ENCODE measurements at regions of chr1 and their contacts with region 1.

Region 1: DNA sequence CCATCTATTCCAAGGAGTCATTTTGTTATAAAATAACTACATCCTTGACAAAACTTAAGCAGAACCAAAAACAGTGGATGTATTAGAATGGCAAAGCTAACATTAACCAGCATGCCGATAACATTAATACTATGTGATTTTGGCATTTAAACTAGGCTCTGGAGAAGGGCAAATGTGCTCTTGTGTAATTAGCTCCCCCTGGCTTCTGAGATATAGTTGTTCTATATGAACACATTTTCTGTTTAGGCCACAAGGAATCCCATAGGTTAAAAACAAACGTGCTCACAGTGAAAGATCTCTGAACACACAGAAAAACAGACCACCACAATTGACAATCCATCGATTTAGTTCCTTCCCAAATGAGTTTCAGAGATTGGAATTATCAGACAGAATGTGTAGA is 57.4 kb upstream of the TARS2 start:
- DNase-seq: no peak
- H3K4me3 Mint-ChIP-seq: no peak overlapping the region
- H3K27ac Mint-ChIP-seq: peak overlapping the region; percentile 32
- H3K4me1 Mint-ChIP-seq: peaks cover 17% of the 10 kb centered on the region
- H3K27me3 Mint-ChIP-seq: no peaks in the 10 kb centered on the region
- CTCF ChIP-seq: peak; percentile 38

Region 2: GRCh38 chr1:150389650-150390049 is 40.2 kb before region 1 on chr1:
- CTCF ChIA-PET with region 1: no interaction called
- intact Hi-C with region 1: loop called (anchors 1 kb)
- DNase-seq: no peak
- H3K4me3 Mint-ChIP-seq: no peak overlapping the region
- H3K27ac Mint-ChIP-seq: no peak overlapping the region
- H3K4me1 Mint-ChIP-seq: peaks cover 42% of the 10 kb centered on the region
- H3K27me3 Mint-ChIP-seq: no peaks in the 10 kb centered on the region
- CTCF ChIP-seq: no peak

Region 3: GRCh38 chr1:150449451-150449850 is 19.6 kb after region 1 on chr1:
- CTCF ChIA-PET with region 1: no interaction called
- intact Hi-C with region 1: no loop called
- DNase-seq: no peak
- H3K4me3 Mint-ChIP-seq: no peak overlapping the region
- H3K27ac Mint-ChIP-seq: no peak overlapping the region
- H3K4me1 Mint-ChIP-seq: no peaks in the 10 kb centered on the region
- H3K27me3 Mint-ChIP-seq: no peaks in the 10 kb centered on the region
- CTCF ChIP-seq: no peak